Aorta (tissue), 5 donors: ENCODE measurements at regions of chr6 and their contacts with region 1.

Region 1: DNA sequence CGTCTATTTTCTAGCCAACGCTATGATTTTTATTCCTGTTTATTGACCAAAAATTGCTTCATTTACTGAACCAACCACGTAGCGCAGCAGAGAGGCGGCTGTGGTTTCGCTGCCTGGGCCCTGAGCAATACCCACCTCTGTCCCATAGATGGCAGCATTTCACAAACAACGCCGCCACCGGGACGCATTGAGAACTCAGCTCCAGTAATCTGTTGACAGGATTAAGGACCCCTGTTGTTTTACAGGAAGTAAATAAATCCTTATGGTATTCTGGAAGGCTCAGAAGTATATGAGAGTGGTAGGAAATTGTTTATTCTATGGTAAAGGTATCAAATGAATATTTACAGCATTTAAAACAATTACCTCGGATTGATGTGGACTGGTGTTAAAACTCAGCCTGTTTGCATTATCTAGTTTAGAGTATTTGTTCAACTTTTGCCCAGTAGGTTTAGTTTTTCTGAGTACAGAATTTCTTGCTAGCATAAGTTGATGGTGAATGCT is 547.9 kb upstream of the SLC35B3 start:
- DNase-seq: peak; percentile 49 to 77
- ATAC-seq: peak; percentile 94
- H3K4me3 ChIP-seq: no peak overlapping the region
- H3K27ac ChIP-seq: no peak overlapping the region
- H3K4me1 ChIP-seq: no peaks in the 10 kb centered on the region
- H3K27me3 ChIP-seq: peaks cover 0 to 1% of the 10 kb centered on the region in 2 donors

Region 2: GRCh38 chr6:9126878-9127560 is 143.8 kb after region 1 on chr6:
- intact Hi-C with region 1: no loop called
- DNase-seq: no peak
- ATAC-seq: no peak
- H3K4me3 ChIP-seq: no peak overlapping the region
- H3K27ac ChIP-seq: no peak overlapping the region
- H3K4me1 ChIP-seq: no peaks in the 10 kb centered on the region
- H3K27me3 ChIP-seq: no peaks in the 10 kb centered on the region

Region 3: DNA sequence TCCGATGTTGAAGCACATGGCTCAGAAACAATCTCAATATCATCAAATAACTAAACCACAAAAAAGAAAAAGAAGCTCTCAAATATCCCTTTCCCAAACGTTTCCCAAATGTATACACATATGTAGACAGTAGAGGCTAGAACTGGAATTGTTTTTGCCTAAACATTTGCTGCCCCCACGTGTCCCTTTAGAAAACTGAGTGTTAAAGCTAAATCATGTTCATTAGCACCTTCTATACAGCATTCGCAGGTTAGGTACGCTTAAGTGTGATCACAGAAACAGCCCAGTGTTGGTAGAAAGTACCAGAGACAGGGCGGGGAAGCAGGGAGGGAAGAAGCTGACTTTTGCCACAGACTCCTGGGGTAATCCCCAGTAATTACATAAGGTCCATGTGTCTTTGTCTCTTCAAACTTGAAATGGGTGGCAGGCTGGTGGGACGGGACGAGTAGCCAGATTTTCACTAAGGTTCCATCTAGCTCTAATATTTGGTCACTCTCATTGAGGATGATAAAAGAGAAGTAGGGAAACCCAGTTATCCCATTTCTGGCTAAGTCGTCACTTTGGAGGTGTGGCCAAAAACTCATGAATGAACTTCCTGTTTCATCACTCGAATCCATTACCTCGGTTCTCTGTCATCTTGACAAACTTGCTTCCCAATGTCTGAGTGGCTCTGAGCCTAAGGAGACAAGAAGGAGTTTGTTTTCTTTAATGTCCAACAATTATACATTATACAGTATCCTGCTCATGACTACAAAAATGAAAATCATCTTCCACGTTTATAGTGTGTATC is 1446.6 kb after region 1 on chr6:
- intact Hi-C with region 1: loop called (anchors 5 kb)
- DNase-seq: no peak
- ATAC-seq: no peak
- H3K4me3 ChIP-seq: no peak overlapping the region
- H3K27ac ChIP-seq: no peak overlapping the region
- H3K4me1 ChIP-seq: no peaks in the 10 kb centered on the region
- H3K27me3 ChIP-seq: no peaks in the 10 kb centered on the region

Region 4: GRCh38 chr6:10434692-10435376 is 1451.6 kb after region 1 on chr6:
- intact Hi-C with region 1: loop called (anchors 5 kb)
- DNase-seq: no peak
- ATAC-seq: no peak
- H3K4me3 ChIP-seq: no peak overlapping the region
- H3K27ac ChIP-seq: no peak overlapping the region
- H3K4me1 ChIP-seq: no peaks in the 10 kb centered on the region
- H3K27me3 ChIP-seq: no peaks in the 10 kb centered on the region